ENCODE measurements at regions of chr15 and their contacts with region 1.

Region 1: DNA sequence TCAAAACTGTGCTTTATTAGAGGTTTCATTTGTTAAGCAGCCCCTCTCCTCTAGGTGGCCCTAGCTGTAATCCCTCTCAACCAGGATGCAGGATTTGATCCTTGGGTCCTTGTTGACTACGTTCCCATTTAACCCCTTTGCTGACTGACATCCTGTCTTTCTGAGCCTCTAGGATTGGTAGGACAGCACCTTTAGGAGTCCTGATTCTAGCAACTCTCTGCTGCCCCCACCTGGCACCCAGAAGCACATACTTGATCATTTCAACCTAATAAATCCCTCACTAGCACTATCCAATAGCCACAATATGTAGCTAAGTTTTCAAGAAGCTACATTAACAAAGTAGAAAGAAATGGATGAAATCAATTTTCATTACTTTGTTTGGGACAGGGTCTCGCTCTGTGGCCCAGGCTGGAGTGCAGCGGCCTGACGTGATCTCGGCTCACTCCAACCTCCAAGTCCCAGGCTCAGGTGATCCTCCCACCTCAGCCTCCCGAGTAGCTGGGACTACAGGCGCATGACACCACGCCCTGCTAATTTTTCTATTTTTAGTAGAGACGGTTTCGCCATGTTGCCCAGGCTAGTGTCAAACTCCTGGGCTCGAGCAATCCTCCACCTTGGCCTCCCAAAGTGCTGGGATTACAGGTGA is 28.3 kb downstream of the RSL24D1 start:
- DNase-seq: peak; percentile 79
- ATAC-seq: peak; percentile 85
- H3K4me3 Mint-ChIP-seq: no peak overlapping the region
- H3K27ac Mint-ChIP-seq: no peak overlapping the region
- H3K4me1 Mint-ChIP-seq: no peaks in the 10 kb centered on the region
- H3K27me3 Mint-ChIP-seq: no peaks in the 10 kb centered on the region

Region 2: DNA sequence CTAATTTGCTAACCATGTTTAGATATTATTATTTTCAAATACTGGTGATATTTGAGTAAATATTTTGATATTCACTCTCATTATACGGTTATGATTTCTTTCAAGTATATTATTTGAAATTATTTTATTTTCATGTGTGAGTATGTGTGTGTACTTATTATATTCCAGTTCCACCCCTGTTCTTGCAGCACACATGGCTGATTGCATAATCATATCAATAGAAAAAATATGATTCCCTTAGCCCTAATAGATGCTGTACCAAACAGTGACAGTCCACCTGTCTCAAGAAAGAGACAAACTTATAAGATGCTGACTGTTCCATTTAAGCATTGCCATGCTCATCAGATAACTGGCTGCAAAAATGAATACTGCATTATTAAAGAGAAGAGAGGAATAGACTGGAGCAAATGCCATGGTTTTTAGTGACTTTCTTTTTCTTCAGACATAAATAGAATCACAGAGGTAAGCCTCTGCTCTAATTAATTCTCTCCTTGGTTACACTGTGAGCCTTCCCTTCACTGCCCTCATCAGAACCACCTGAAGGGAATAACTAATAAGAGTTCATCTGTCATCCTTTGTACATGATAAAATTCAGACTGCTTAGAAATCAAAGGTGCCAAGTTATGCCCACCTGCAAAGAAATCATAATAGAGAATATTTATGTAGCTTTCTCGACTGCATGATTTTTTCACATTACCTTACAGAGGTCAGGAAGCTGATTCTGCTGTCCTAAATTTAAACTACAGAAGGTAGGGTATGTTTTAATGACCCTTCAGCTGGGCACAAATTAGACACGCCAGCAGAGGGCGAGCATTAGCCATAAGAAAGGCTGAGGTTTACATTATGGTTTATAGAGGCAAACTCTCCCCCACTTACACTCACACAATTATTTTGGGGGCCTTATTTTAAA is 1205.9 kb before region 1 on chr15:
- CTCF ChIA-PET with region 1: interaction called, 3 read pairs
- POLR2A ChIA-PET with region 1: no interaction called
- intact Hi-C with region 1: loop called (anchors 1 to 5 kb)
- DNase-seq: peak; percentile 59
- ATAC-seq: no peak
- H3K4me3 Mint-ChIP-seq: no peak overlapping the region
- H3K27ac Mint-ChIP-seq: no peak overlapping the region
- H3K4me1 Mint-ChIP-seq: no peaks in the 10 kb centered on the region
- H3K27me3 Mint-ChIP-seq: peaks cover 6% of the 10 kb centered on the region

Region 3: DNA sequence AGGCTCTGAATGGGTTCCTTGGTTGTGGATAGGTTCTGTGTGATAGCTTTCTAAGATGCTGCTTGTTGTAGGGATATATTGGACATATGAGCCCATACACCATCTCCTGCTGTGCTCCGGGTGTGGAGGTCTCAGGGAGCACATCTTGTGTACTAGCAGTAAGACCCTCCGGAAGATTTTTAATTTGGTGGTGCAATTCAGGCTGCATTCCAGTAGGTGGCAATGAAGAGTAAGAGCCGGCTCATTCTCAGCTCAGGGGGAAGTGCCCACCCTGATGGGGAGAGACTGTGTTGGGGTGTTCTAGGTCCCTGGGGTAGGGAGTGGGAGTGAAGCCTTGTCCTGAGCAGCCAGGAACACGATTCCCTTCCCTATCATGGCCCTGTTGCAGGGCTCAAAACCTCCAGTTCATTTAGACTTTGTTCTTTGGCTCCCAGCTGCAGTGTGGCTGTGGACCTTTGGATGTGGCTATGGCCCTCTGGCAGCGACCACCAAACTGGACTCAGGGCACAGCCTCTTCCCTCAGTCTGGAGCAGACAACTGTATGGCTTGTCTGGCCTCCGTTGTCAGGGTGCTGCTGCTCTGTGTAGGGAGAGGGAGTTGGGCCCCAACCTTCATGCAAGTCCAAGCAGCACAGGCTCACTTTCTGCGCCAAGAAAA is 1085.5 kb before region 1 on chr15:
- CTCF ChIA-PET with region 1: interaction called, 3 read pairs
- POLR2A ChIA-PET with region 1: no interaction called
- intact Hi-C with region 1: loop called in 1 of 2 experiments (anchors 1 kb)
- DNase-seq: peak; percentile 20
- ATAC-seq: no peak
- H3K4me3 Mint-ChIP-seq: no peak overlapping the region
- H3K27ac Mint-ChIP-seq: no peak overlapping the region
- H3K4me1 Mint-ChIP-seq: no peaks in the 10 kb centered on the region
- H3K27me3 Mint-ChIP-seq: peaks cover 6% of the 10 kb centered on the region

Region 4: GRCh38 chr15:55179141-55179540 is 10.7 kb after region 1 on chr15:
- CTCF ChIA-PET with region 1: interaction called, 23 read pairs
- POLR2A ChIA-PET with region 1: no interaction called
- intact Hi-C with region 1: no loop called
- DNase-seq: no peak
- ATAC-seq: no peak
- H3K4me3 Mint-ChIP-seq: no peak overlapping the region
- H3K27ac Mint-ChIP-seq: peak overlapping the region; percentile 6
- H3K4me1 Mint-ChIP-seq: peaks cover 4% of the 10 kb centered on the region
- H3K27me3 Mint-ChIP-seq: no peaks in the 10 kb centered on the region

Measured in activated CD4-positive, alpha-beta T cell treated with anti-CD3 and anti-CD28 coated beads for 36 hours (primary cell).